ENCODE measurements at regions of chr17 and their contacts with region 1.

Region 1: GRCh38 chr17:60392042-60392844 is at the start of gene USP32:
- DNase-seq: peak; percentile 97
- ATAC-seq: peak; percentile 91
- H3K4me3 ChIP-seq: peak within 1 kb of the TSS; percentile 63
- H3K27ac ChIP-seq: peak within 1 kb of the TSS; percentile 97
- H3K4me1 ChIP-seq: peaks cover 2% of the 10 kb centered on the region; the same call in 1 of the 2 replicates
- H3K27me3 ChIP-seq: no peaks in the 10 kb centered on the region
- CTCF ChIP-seq: peak; percentile 31; the same call in 1 of the 2 replicates
- POLR2A ChIP-seq: peak; percentile 87
- RAD21 ChIP-seq: no peak
- total RNA-seq, gene USP32: 46.8 and 48.6 TPM in 2 replicates

Region 2: GRCh38 chr17:60231234-60231633 is 161.0 kb before region 1 on chr17:
- CTCF ChIA-PET with region 1: interaction called, 3 read pairs
- POLR2A ChIA-PET with region 1: no interaction called
- dilution Hi-C with region 1: no loop called
- in situ Hi-C with region 1: no loop called
- intact Hi-C with region 1: loop called (anchors 2 kb)
- DNase-seq: peak; percentile 39
- ATAC-seq: peak; percentile 73
- H3K4me3 ChIP-seq: no peak overlapping the region
- H3K27ac ChIP-seq: no peak overlapping the region
- H3K4me1 ChIP-seq: peaks cover 2% of the 10 kb centered on the region; the same call in 1 of the 2 replicates
- H3K27me3 ChIP-seq: no peaks in the 10 kb centered on the region
- CTCF ChIP-seq: peak; percentile 56
- POLR2A ChIP-seq: no peak
- RAD21 ChIP-seq: peak; percentile 58

Region 3: DNA sequence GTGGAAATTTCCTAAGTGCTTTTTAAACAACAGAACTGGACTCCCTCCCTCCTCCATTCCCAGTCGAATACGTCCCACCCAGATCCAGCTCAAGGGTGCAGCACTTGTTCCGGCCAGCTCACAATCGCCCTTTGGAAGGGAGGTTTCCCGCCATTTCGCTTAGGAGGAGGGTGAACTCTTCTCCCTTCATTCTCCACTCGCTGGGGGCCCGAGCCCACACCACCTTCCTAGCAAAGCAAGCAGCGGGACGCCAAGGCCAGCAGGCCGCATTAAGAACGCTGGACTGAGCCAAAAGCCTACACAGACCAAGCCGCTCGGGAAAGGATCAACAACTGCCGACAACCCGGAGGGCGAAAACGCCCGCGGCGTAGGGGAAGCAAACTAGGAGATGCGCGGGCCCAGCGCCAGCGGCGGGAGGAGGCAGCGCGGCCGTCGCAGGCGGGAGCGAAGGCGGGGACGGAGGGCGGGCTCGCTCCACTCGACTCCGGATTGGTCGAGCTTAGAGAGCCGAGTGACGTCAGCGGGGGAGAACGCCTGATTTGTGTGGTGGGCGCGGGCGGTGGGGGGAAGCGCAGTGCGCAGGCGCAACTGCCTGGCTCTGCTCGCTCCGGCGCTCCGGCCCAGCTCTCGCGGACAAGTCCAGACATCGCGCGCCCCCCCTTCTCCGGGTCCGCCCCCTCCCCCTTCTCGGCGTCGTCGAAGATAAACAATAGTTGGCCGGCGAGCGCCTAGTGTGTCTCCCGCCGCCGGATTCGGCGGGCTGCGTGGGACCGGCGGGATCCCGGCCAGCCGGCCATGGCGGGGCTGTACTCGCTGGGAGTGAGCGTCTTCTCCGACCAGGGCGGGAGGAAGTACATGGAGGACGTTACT is 207.6 kb after region 1 on chr17 and contains the start of gene PPM1D:
- CTCF ChIA-PET with region 1: no interaction called
- POLR2A ChIA-PET with region 1: no interaction called
- dilution Hi-C with region 1: no loop called
- in situ Hi-C with region 1: no loop called
- intact Hi-C with region 1: loop called (anchors 5 kb)
- DNase-seq: peak; percentile 99
- ATAC-seq: peak; percentile 95
- H3K4me3 ChIP-seq: peak within 1 kb of the TSS; percentile 97
- H3K27ac ChIP-seq: peak within 1 kb of the TSS; percentile 93
- H3K4me1 ChIP-seq: peaks cover 2% of the 10 kb centered on the region; the same call in 1 of the 2 replicates
- H3K27me3 ChIP-seq: no peaks in the 10 kb centered on the region
- CTCF ChIP-seq: no peak
- POLR2A ChIP-seq: peak; percentile 82
- RAD21 ChIP-seq: no peak
- total RNA-seq, gene PPM1D: 15.8 and 16.1 TPM in 2 replicates

Region 4: DNA sequence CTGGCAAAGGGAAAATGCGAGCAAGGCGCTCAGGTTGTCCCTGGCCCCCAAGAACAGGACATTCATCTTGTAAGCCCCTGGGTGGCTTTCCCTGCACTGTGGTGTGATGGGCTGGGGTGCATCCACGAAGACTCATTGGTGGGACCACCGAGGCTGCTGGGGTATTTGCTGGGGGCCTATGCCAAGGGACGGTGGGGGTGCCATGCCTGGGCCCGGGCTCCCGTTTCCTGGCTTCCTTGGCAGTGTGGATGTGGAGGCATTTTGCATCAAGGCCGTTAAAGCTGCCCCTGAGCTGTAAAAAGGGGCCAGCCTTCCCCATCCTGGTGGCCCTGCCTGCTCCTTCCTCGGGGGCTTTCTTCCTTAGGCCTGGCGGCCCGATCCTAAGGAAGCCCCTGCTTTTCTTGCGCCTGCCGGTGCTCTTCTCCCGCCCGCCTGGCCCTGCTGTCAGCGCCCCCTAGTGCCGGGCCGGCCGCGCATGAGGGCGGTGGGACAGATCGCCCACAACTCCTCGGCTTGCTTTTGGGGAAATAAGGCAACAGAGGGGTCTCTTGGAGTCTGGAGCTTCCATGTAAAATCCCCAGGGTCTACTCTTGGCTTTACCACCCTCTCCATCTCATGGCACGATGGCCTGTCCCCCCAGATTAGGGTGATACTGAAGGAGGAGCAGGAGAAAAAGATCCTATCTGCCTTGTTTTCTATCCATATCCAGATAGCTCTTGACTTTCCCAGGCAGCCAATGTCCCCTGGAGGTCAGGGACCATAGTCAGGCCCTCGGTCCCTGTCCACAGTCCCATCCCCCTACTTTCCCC is 997.6 kb after region 1 on chr17:
- CTCF ChIA-PET with region 1: no interaction called
- POLR2A ChIA-PET with region 1: no interaction called
- dilution Hi-C with region 1: no loop called
- in situ Hi-C with region 1: no loop called
- intact Hi-C with region 1: no loop called
- DNase-seq: peak; percentile 41
- ATAC-seq: peak; percentile 72
- H3K4me3 ChIP-seq: no peak overlapping the region
- H3K27ac ChIP-seq: peak overlapping the region; percentile 9; the same call in 1 of the 2 replicates
- H3K4me1 ChIP-seq: peaks cover 19% of the 10 kb centered on the region
- H3K27me3 ChIP-seq: no peaks in the 10 kb centered on the region
- CTCF ChIP-seq: peak; percentile 85
- POLR2A ChIP-seq: no peak
- RAD21 ChIP-seq: peak; percentile 89

Measured in IMR-90 (cell line).